Esophagus muscularis mucosa (tissue), 4 donors: ENCODE measurements at regions of chr20 and their contacts with region 1.

Region 1: GRCh38 chr20:17617551-17618223 is 47.8 kb downstream of the DSTN start:
- DNase-seq: no peak
- H3K4me3 ChIP-seq: no peak overlapping the region
- H3K27ac ChIP-seq: peak overlapping the region in 1 of 4 donors; percentile 13
- H3K4me1 ChIP-seq: peaks cover 30 to 55% (median 53%) of the 10 kb centered on the region in 4 donors
- H3K27me3 ChIP-seq: no peaks in the 10 kb centered on the region
- CTCF ChIP-seq: peak; percentile 77 to 90 (median 83)
- EP300 ChIP-seq: no peak
- POLR2A ChIP-seq: no peak

Region 2: DNA sequence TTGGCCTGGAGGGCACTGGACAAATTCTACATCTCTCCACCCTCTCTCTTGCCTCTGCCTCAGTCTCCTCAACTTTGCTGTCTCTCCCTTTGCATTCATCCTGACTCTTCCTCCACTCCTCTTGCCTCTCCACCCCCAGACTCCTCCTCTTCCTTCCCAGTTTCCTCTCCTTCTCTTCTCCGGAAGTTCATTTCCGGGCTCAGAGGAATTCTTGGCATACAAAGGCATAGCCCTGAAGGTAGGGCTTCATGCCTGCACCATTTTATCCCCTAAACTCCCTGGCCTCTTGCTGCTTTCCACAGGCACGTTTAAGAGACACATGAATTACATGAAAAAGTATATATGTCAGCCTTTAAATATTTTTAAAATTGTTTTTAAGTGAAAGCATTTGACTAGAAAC is 97.1 kb before region 1 on chr20:
- intact Hi-C with region 1: loop called (anchors 5 kb)
- DNase-seq: no peak
- H3K4me3 ChIP-seq: no peak overlapping the region
- H3K27ac ChIP-seq: no peak overlapping the region
- H3K4me1 ChIP-seq: no peaks in the 10 kb centered on the region
- H3K27me3 ChIP-seq: no peaks in the 10 kb centered on the region
- CTCF ChIP-seq: no peak
- EP300 ChIP-seq: no peak
- POLR2A ChIP-seq: no peak